ENCODE measurements at regions of chr2 and their contacts with region 1.

Region 1: GRCh38 chr2:202588647-202589581 is 45.9 kb upstream of the FAM117B start:
- DNase-seq: peak; percentile 23
- H3K4me3 ChIP-seq: peak overlapping the region; percentile 27; the same call in 1 of the 2 replicates
- H3K27ac ChIP-seq: no peak overlapping the region
- H3K27me3 ChIP-seq: no peaks in the 10 kb centered on the region
- CTCF ChIP-seq: peak; percentile 96

Region 2: GRCh38 chr2:202577250-202578183 is 11.4 kb before region 1 on chr2:
- CTCF ChIA-PET with region 1: interaction called, 11 read pairs
- POLR2A ChIA-PET with region 1: no interaction called
- DNase-seq: no peak
- H3K4me3 ChIP-seq: no peak overlapping the region
- H3K27ac ChIP-seq: no peak overlapping the region
- H3K27me3 ChIP-seq: no peaks in the 10 kb centered on the region
- CTCF ChIP-seq: no peak

Region 3: GRCh38 chr2:202599105-202599504 is 10.2 kb after region 1 on chr2:
- CTCF ChIA-PET with region 1: interaction called, 18 read pairs
- POLR2A ChIA-PET with region 1: no interaction called
- DNase-seq: no peak
- H3K4me3 ChIP-seq: no peak overlapping the region
- H3K27ac ChIP-seq: no peak overlapping the region
- H3K27me3 ChIP-seq: no peaks in the 10 kb centered on the region
- CTCF ChIP-seq: no peak

Region 4: DNA sequence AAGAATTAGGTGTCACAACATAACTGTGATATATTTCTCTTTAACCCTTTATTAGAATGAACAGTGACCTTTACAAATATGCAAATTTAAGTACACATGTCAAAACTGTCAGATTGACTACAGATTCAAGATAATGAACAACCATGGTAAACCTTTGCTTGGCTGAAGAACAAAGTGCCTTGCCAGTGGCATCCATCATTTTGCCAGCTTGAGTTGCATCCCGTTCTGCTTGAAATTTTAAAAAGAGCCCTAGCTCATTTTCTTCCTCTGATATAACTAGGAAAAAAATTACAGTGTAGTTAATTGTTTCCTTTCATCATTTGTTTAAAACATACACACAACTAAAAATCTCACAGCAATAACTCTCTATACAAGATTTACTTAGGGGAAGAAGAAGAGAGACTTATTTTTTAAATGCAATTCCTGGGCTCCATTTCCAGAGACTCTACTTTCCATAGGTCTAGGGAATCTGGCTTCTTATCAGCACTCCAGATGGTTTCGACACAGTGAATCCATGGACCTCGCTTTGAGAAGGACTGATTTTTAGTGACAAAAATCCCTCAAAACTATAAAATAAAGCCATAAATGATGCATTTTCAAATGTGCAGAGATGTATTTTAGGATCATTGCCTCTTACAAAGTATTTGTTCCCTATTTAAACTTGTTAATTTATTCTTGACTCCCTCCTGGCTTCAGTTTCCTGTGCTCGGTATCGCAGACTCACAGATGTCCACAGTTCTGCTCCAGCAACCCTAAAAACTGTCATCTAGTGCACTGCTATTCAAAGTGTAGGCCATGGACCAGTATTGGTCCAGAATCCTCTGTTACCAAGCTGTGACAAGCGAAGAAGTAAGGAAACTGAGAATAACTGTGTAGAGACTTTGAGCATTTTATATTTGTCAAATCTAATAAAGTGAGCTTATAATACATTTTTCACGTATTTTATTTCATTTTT is 232.6 kb after region 1 on chr2:
- CTCF ChIA-PET with region 1: interaction called, 10 read pairs
- POLR2A ChIA-PET with region 1: no interaction called
- DNase-seq: no peak
- H3K4me3 ChIP-seq: no peak overlapping the region
- H3K27ac ChIP-seq: no peak overlapping the region
- H3K27me3 ChIP-seq: no peaks in the 10 kb centered on the region
- CTCF ChIP-seq: no peak

Region 5: DNA sequence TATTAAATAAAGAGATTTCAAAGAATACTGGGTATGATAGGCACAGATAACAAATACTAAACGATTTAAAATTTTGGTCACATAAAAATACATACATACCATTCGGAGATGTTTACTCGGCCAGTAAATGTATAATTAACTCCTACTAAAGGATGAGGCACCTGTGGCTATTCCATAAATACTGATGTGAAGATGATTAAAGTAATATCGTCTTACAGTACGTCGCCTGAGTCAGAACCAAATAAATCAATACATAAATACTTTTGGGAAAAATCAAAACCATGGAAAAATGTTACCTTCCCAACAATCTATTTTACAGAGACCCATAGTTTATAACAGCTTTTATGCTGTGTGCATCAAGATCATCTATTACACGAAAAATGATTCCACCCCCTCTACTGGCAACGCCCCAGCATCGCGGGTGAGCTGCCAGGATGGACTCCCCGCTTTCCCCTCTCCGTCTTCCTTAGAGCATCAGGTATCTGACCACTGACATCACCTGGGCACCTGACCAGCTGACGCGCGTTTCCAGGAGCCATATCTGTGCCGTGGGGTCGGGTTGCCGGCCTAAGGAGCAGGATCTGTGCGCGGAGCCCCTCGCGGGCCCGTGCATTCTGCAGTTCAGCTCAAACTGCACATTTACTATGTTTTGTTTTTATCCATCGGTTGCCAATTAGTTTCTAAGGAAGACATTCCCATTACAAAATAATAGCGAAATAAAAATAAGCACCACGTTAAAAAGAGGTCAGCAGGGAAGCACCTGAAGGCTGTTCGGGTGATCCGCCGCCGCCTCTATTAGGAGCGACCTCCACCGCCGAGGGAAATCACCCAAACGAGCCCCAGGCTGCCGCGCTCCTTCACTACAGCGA is 281.8 kb after region 1 on chr2:
- CTCF ChIA-PET with region 1: interaction called, 16 read pairs
- POLR2A ChIA-PET with region 1: interaction called, 4 read pairs
- DNase-seq: no peak
- H3K4me3 ChIP-seq: peak overlapping the region; percentile 78
- H3K27ac ChIP-seq: peak overlapping the region; percentile 52
- H3K27me3 ChIP-seq: no peaks in the 10 kb centered on the region
- CTCF ChIP-seq: peak; percentile 55

Measured in AG04450 (cell line).